ENCODE measurements at regions of chr17 and their contacts with region 1.

Region 1: GRCh38 chr17:10881959-10882358 is 44.1 kb upstream of the PIRT start:
- DNase-seq: no peak
- ATAC-seq: no peak
- H3K4me3 ChIP-seq: no peak overlapping the region
- H3K27ac ChIP-seq: no peak overlapping the region
- H3K4me1 ChIP-seq: no peaks in the 10 kb centered on the region
- H3K27me3 ChIP-seq: no peaks in the 10 kb centered on the region

Region 2: GRCh38 chr17:10631048-10631700 is 250.8 kb before region 1 on chr17:
- intact Hi-C with region 1: no loop called
- DNase-seq: no peak
- ATAC-seq: no peak
- H3K4me3 ChIP-seq: no peak overlapping the region
- H3K27ac ChIP-seq: no peak overlapping the region
- H3K4me1 ChIP-seq: no peaks in the 10 kb centered on the region
- H3K27me3 ChIP-seq: no peaks in the 10 kb centered on the region

Region 3: DNA sequence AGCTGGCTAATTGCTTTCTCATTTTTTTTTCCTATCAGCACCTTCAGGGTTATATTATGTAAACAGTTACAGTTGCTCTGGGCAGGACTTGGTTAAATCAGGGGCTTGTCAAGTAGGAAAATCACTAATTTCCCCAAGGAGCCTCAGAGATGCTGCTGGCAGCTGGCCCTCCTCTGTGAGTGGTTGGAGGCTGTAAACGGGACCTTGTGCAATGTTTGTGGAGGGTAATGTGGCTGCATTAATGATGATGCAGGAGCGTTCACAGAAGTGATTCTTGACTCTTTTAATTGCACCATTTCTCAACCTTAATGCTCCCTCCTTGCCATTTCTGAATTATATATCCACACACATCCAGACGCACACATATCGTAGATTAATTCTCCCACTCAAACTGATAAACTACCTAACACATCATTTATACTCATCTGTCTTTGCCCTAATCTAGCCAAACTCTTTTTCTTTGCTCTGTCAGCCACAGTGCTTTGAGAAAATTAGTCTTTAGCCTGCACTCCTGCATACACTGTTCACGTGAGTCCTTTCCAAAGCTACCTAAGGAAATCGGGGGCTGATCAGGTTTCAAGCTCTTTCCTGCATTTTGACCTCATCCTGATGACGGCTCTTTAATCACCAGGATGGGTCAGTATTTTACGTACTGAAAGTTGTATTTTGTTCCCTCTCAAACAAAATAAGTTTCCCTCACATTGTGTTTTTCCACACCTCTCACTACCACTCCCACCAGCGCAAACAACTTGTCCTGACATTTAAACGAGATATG is 110.3 kb after region 1 on chr17:
- intact Hi-C with region 1: no loop called
- DNase-seq: no peak
- ATAC-seq: no peak
- H3K4me3 ChIP-seq: no peak overlapping the region
- H3K27ac ChIP-seq: no peak overlapping the region
- H3K4me1 ChIP-seq: no peaks in the 10 kb centered on the region
- H3K27me3 ChIP-seq: no peaks in the 10 kb centered on the region

Region 4: GRCh38 chr17:11144358-11145233 is 262.6 kb after region 1 on chr17:
- intact Hi-C with region 1: loop called in 1 of 4 experiments (anchors 5 kb)
- DNase-seq: peak in 2 of 3 donors; percentile 28 to 35
- ATAC-seq: peak; percentile 52 to 87
- H3K4me3 ChIP-seq: no peak overlapping the region
- H3K27ac ChIP-seq: no peak overlapping the region
- H3K4me1 ChIP-seq: no peaks in the 10 kb centered on the region
- H3K27me3 ChIP-seq: no peaks in the 10 kb centered on the region